ENCODE measurements at regions of chr2 and their contacts with region 1.

Region 1: GRCh38 chr2:174697255-174697654 is 67.0 kb downstream of the CHRNA1 start:
- DNase-seq: peak in 1 of 2 experiments; percentile 70
- H3K4me3 ChIP-seq: no peak overlapping the region
- H3K27ac ChIP-seq: no peak overlapping the region
- H3K4me1 ChIP-seq: peaks cover 0 to 5% (median 1%) of the 10 kb centered on the region in 4 experiments; a peak in 3 of 7 replicates
- H3K27me3 ChIP-seq: no peaks in the 10 kb centered on the region
- CTCF ChIP-seq: peak; percentile 96 to 98 (median 96)
- EP300 ChIP-seq: no peak
- POLR2A ChIP-seq: no peak
- RAD21 ChIP-seq: peak; percentile 90 to 92

Region 2: DNA sequence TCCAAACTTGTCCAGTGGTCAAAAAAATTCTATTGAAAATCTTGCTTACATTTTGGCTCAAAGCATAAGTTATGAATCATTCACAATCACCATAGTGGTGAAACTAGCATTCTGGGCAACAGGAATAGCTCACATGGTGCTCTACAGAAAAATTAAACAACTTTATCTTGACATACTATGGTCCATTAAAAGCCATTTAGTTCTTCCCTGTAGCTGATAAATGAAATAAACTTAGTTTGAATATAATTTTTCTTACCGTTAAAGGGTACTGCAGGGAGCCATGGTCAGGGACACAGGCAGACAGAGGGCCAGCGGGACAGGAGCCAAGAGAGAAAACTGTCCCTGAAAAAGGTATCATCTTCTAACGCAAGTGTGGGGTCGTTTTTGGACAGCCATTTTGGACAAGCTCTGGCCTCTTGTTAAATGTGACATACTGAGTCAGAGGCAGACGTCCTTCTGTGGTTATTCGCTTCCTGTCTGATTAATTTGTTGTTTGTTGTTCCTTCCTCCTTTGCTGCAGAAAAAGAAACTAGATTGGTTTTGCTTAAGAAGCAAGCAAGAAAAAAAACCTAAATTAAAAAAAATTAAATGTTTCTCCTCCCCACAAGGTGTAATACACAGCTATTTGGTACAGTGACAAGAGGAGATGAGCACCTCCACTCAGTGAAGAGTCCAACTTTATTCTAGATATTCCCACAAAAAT is 99.8 kb before region 1 on chr2 and contains the start of gene WIPF1:
- CTCF ChIA-PET with region 1: interaction called, 10 read pairs
- POLR2A ChIA-PET with region 1: no interaction called
- DNase-seq: no peak
- H3K4me3 ChIP-seq: no peak within 1 kb of the TSS
- H3K27ac ChIP-seq: no peak within 1 kb of the TSS
- H3K4me1 ChIP-seq: peaks cover 0 to 5% (median 4%) of the 10 kb centered on the region in 4 experiments; a peak in 3 of 7 replicates
- H3K27me3 ChIP-seq: no peaks in the 10 kb centered on the region
- CTCF ChIP-seq: no peak
- EP300 ChIP-seq: no peak
- POLR2A ChIP-seq: no peak
- RAD21 ChIP-seq: no peak
- total RNA-seq, gene WIPF1: 4.3 and 5.2 TPM in 2 replicates

Region 3: GRCh38 chr2:174717273-174717672 is 20.0 kb after region 1 on chr2:
- CTCF ChIA-PET with region 1: interaction called, 173 read pairs
- POLR2A ChIA-PET with region 1: no interaction called
- DNase-seq: no peak
- H3K4me3 ChIP-seq: no peak overlapping the region
- H3K27ac ChIP-seq: no peak overlapping the region
- H3K4me1 ChIP-seq: no peaks in the 10 kb centered on the region
- H3K27me3 ChIP-seq: no peaks in the 10 kb centered on the region
- CTCF ChIP-seq: no peak
- EP300 ChIP-seq: no peak
- POLR2A ChIP-seq: no peak
- RAD21 ChIP-seq: no peak

Region 4: DNA sequence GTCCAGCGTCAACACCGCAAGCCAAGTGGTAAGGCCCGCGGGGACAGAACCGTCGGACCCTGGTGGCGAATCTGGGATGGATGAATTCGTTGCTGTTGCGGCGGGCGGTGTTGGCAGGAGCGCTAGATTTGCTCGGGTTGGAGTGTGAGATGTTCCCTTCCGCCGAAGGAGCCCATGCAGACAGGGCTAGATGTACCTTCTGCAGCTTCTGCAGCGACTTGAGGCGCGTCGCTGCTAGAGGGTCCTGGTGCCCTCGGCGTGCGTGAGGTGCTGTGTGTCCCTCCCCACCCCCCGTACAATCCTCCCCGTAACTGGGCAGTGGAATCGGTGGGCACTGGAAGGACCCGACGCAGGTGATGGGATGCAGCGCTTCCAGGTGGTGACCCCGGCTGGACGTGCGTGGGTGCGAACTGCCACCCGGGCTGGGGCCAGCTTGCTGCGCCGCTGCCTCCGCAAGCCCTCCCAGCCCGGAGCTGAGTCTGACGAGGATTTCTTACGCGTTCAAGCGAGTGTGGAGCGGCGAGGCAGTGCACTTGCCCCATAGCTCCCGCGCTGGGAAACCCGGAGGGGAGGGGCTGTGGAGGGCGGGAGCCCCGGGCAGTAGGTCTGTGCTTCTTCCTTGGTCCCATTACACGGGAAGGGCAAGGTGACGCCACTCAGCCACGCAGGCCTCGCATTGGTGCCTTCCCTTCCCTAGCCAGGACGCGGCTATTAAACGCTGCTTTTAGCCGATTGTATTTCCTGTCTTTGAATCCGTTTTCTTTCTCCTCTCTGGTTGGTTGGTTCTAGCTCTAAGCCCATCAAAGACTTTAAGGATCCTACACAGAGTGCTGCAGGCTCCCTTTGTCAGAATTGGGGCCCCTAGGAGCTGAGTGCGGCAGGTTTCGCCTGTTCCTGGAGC is 32.8 kb after region 1 on chr2:
- CTCF ChIA-PET with region 1: interaction called, 47 read pairs
- POLR2A ChIA-PET with region 1: no interaction called
- DNase-seq: peak; percentile 29 to 59
- H3K4me3 ChIP-seq: peak overlapping the region; percentile 40 to 66 (median 50)
- H3K27ac ChIP-seq: no peak overlapping the region
- H3K4me1 ChIP-seq: peaks cover 0 to 1% (median 0%) of the 10 kb centered on the region in 4 experiments; a peak in 3 of 7 replicates
- H3K27me3 ChIP-seq: peaks cover 0 to 20% (median 9%) of the 10 kb centered on the region in 4 experiments; a peak in 5 of 7 replicates
- CTCF ChIP-seq: 0 out of 4 replicates have a peak, but pooled peaks of 1 of the 3 experiments have one; percentile 11
- EP300 ChIP-seq: no peak
- POLR2A ChIP-seq: no peak
- RAD21 ChIP-seq: no peak

Region 5: DNA sequence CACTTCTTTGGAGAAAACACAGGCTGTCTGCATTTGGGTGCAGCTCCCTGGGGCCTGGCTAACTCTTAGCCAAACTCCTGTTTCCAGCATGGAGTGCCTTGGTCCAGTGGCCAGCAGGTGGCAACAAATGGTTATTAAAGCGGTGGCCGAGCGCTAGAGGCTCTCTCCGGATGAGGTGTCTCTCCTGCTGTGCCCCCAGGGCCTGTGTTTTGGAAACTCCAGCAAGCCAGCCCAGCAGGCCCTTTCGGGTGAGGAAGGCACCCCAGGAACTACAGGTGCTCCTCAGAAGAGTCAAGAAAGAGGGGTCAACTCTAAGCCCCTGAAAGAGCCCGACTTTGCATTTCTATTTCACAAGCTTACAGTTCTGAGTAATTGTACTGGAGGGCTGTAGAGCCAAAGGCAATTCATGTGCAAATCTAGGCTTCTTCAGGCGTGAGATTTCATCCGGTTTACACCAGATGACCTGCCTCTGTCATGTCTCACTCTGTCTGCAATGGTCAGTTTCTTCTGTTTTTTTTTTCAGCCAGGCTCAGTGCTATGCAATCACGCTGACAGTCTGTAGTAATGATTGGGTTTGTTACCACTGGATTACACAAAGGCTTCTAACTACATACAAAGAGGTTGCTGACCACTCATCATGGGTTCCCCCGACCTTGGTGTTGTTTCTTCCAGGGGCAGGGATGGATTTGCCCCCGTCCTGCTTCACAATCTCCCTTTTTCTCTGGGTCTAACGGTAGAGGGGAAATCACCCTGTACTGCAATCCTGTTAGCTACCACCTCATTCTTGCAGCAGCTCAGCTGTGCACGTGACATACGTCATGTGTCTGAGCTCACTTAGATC is 74.6 kb after region 1 on chr2:
- CTCF ChIA-PET with region 1: interaction called, 93 read pairs
- POLR2A ChIA-PET with region 1: no interaction called
- DNase-seq: peak; percentile 85 to 93
- H3K4me3 ChIP-seq: no peak overlapping the region; a peak in 2 of 8 replicates
- H3K27ac ChIP-seq: peak overlapping the region; percentile 80
- H3K4me1 ChIP-seq: peaks cover 11 to 19% (median 12%) of the 10 kb centered on the region in 4 experiments
- H3K27me3 ChIP-seq: no peaks in the 10 kb centered on the region
- CTCF ChIP-seq: peak; percentile 79 to 94 (median 86)
- EP300 ChIP-seq: peak in 1 of 2 experiments; percentile 66; a peak in 1 of 3 replicates
- POLR2A ChIP-seq: peak in 1 of 2 experiments; percentile 52; a peak in 2 of 3 replicates
- RAD21 ChIP-seq: peak; percentile 91 to 95

Region 6: GRCh38 chr2:174800436-174801205 is 103.4 kb after region 1 on chr2:
- CTCF ChIA-PET with region 1: no interaction called
- POLR2A ChIA-PET with region 1: no interaction called
- DNase-seq: no peak
- H3K4me3 ChIP-seq: no peak overlapping the region
- H3K27ac ChIP-seq: no peak overlapping the region
- H3K4me1 ChIP-seq: peaks cover 6 to 15% (median 11%) of the 10 kb centered on the region in 4 experiments; a peak in 5 of 7 replicates
- H3K27me3 ChIP-seq: peaks cover 0 to 1% (median 0%) of the 10 kb centered on the region in 4 experiments; a peak in 1 of 7 replicates
- CTCF ChIP-seq: no peak
- EP300 ChIP-seq: no peak
- POLR2A ChIP-seq: no peak
- RAD21 ChIP-seq: no peak

Region 7: DNA sequence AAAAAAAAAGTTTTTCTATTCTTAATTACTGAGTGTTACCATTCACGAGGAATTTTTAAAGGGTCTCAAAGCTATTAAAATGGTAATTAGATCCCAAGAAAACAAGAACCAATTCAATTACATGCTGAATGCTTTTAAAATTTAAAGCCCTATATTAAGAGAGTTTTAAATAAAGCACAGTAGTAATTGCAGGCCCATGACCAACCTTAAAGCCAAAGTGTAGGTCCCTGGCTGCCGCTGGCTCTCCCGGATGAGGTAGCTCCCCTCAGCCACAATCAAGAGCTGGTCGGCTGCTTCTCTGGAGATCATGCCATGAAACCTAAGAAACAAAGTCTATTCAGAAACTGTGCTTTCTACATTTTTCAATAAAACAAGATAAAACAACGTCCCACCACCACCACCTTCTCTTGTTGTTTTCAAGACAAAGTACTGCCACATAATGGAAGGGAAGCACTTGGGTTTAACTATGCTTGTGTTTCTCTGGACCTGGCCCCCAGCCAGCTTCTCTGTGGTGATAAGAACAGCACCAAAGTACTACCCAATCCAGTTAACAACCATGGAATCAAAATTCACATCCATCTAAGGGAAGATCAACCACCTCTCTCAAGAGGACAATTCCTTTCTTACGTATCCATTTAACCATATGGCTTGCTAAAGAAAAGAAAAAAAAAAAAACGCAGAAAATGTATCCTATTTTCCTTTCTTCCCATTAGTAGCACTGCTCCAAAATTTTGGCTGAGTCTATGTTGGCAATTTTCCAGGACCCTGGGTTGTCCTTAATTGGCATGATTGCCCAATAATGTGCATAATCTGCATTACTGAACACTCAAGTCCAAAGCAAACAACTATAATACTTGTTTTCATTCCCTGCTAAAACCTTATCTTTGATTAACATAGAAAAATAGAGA is 217.9 kb after region 1 on chr2:
- CTCF ChIA-PET with region 1: no interaction called
- POLR2A ChIA-PET with region 1: no interaction called
- DNase-seq: no peak
- H3K4me3 ChIP-seq: no peak overlapping the region
- H3K27ac ChIP-seq: no peak overlapping the region
- H3K4me1 ChIP-seq: peaks cover 0 to 5% (median 2%) of the 10 kb centered on the region in 4 experiments; a peak in 3 of 7 replicates
- H3K27me3 ChIP-seq: no peaks in the 10 kb centered on the region
- CTCF ChIP-seq: no peak
- EP300 ChIP-seq: no peak
- POLR2A ChIP-seq: no peak
- RAD21 ChIP-seq: no peak

Region 8: GRCh38 chr2:175030380-175031271 is 333.4 kb after region 1 on chr2:
- CTCF ChIA-PET with region 1: interaction called, 21 read pairs
- POLR2A ChIA-PET with region 1: no interaction called
- DNase-seq: peak; percentile 13 to 63
- H3K4me3 ChIP-seq: no peak overlapping the region
- H3K27ac ChIP-seq: no peak overlapping the region
- H3K4me1 ChIP-seq: no peaks in the 10 kb centered on the region; a peak in 1 of 7 replicates
- H3K27me3 ChIP-seq: no peaks in the 10 kb centered on the region
- CTCF ChIP-seq: peak; percentile 56 to 70 (median 60)
- EP300 ChIP-seq: no peak
- POLR2A ChIP-seq: no peak
- RAD21 ChIP-seq: peak; percentile 84 to 85

Region 9: GRCh38 chr2:175355246-175355645 is 658.0 kb after region 1 on chr2:
- CTCF ChIA-PET with region 1: interaction called, 10 read pairs
- POLR2A ChIA-PET with region 1: no interaction called
- DNase-seq: no peak
- H3K4me3 ChIP-seq: no peak overlapping the region
- H3K27ac ChIP-seq: no peak overlapping the region
- H3K4me1 ChIP-seq: no peaks in the 10 kb centered on the region
- H3K27me3 ChIP-seq: no peaks in the 10 kb centered on the region
- CTCF ChIP-seq: no peak
- EP300 ChIP-seq: no peak
- POLR2A ChIP-seq: no peak
- RAD21 ChIP-seq: no peak

Measured in H1 (cell line).